Upper lobe of right lung (tissue), 1 donor: ENCODE measurements at regions of chr1 and their contacts with region 1.

Region 1: GRCh38 chr1:149962123-149962548 is 25.5 kb upstream of the MTMR11 start:
- DNase-seq: no peak
- ATAC-seq: peak; percentile 98
- H3K4me3 ChIP-seq: no peak overlapping the region
- H3K27ac ChIP-seq: peak overlapping the region; percentile 70
- H3K4me1 ChIP-seq: peaks cover 22% of the 10 kb centered on the region
- H3K27me3 ChIP-seq: no peaks in the 10 kb centered on the region
- CTCF ChIP-seq: peak; percentile 84

Region 2: GRCh38 chr1:150056407-150056806 is 94.3 kb after region 1 on chr1:
- intact Hi-C with region 1: loop called (anchors 5 kb)
- DNase-seq: no peak
- ATAC-seq: peak; percentile 47
- H3K4me3 ChIP-seq: no peak overlapping the region
- H3K27ac ChIP-seq: no peak overlapping the region
- H3K4me1 ChIP-seq: no peaks in the 10 kb centered on the region
- H3K27me3 ChIP-seq: no peaks in the 10 kb centered on the region
- CTCF ChIP-seq: no peak

Region 3: GRCh38 chr1:150144606-150145005 is 182.5 kb after region 1 on chr1:
- intact Hi-C with region 1: no loop called
- DNase-seq: no peak
- ATAC-seq: no peak
- H3K4me3 ChIP-seq: no peak overlapping the region
- H3K27ac ChIP-seq: no peak overlapping the region
- H3K4me1 ChIP-seq: no peaks in the 10 kb centered on the region
- H3K27me3 ChIP-seq: no peaks in the 10 kb centered on the region
- CTCF ChIP-seq: no peak

Region 4: GRCh38 chr1:150168960-150169601 is 206.9 kb after region 1 on chr1:
- intact Hi-C with region 1: no loop called
- DNase-seq: peak; percentile 76
- ATAC-seq: peak; percentile 78
- H3K4me3 ChIP-seq: no peak overlapping the region
- H3K27ac ChIP-seq: no peak overlapping the region
- H3K4me1 ChIP-seq: no peaks in the 10 kb centered on the region
- H3K27me3 ChIP-seq: no peaks in the 10 kb centered on the region
- CTCF ChIP-seq: peak; percentile 73